ENCODE measurements at regions of chr9 and their contacts with region 1.

Region 1: GRCh38 chr9:12775679-12776512 is 1.1 kb downstream of the LURAP1L start:
- DNase-seq: peak; percentile 51 to 69
- H3K4me3 ChIP-seq: peak overlapping the region; percentile 59 to 94
- H3K27ac ChIP-seq: peak overlapping the region; percentile 87 to 96
- H3K4me1 ChIP-seq: peaks cover 2 to 7% of the 10 kb centered on the region in 2 donors
- H3K27me3 ChIP-seq: no peaks in the 10 kb centered on the region
- CTCF ChIP-seq: peak; percentile 39 to 56 (median 53)

Region 2: DNA sequence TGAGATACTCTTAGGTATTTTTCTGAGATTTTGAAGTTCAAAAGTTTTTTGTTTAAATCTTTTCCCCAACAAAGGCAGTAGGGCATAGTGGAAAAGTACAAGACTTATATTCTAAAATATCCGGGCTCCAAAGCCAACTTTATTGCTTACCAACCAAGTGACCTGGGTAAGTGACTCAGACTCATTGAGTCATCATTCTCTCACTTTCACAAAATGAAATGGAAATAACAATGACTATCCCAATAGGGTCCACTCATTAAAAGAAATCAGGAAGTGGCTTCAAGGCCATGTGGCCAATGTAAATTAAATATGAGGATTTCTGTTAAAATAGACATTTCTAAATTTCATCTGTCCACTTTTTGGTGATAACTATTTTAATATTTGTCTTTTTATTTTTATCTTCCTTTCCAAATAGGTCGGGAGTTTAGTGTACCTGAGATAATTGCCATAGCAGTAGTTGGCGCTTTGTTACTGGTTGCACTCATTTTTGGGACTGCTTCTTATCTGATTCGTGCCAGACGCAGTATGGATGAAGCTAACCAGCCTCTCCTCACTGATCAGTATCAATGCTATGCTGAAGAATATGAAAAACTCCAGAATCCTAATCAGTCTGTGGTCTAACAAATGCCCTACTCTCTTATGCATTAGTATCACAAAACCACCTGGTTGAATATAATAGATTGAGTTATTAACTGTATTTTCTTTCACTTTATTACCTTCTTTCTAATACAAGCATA is 67.2 kb before region 1 on chr9:
- intact Hi-C with region 1: loop called (anchors 5 kb)
- DNase-seq: no peak
- H3K4me3 ChIP-seq: no peak overlapping the region
- H3K27ac ChIP-seq: no peak overlapping the region
- H3K4me1 ChIP-seq: no peaks in the 10 kb centered on the region
- H3K27me3 ChIP-seq: no peaks in the 10 kb centered on the region
- CTCF ChIP-seq: no peak

Region 3: DNA sequence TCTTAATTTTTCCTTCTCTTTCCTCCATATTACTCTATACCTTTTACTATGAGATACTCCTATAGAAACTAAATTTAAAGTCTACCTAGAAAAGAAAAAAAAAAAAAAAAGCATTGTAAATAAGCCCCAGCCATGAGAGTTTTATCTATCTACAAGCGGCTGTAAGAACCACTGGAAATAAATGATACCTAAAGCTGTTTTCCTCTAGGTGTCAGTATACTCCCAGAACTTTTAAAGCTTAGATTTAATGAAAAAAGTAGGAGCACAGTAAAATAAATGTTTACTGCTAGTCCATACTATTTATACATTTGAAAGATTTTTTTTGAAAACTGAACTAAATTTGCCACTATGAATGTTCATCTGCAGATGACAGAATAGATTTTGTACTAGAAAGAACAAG is 56.5 kb before region 1 on chr9:
- intact Hi-C with region 1: loop called (anchors 2 kb)
- DNase-seq: no peak
- H3K4me3 ChIP-seq: no peak overlapping the region
- H3K27ac ChIP-seq: no peak overlapping the region
- H3K4me1 ChIP-seq: no peaks in the 10 kb centered on the region
- H3K27me3 ChIP-seq: no peaks in the 10 kb centered on the region
- CTCF ChIP-seq: peak in 2 of 3 experiments; percentile 40 to 56

Region 4: DNA sequence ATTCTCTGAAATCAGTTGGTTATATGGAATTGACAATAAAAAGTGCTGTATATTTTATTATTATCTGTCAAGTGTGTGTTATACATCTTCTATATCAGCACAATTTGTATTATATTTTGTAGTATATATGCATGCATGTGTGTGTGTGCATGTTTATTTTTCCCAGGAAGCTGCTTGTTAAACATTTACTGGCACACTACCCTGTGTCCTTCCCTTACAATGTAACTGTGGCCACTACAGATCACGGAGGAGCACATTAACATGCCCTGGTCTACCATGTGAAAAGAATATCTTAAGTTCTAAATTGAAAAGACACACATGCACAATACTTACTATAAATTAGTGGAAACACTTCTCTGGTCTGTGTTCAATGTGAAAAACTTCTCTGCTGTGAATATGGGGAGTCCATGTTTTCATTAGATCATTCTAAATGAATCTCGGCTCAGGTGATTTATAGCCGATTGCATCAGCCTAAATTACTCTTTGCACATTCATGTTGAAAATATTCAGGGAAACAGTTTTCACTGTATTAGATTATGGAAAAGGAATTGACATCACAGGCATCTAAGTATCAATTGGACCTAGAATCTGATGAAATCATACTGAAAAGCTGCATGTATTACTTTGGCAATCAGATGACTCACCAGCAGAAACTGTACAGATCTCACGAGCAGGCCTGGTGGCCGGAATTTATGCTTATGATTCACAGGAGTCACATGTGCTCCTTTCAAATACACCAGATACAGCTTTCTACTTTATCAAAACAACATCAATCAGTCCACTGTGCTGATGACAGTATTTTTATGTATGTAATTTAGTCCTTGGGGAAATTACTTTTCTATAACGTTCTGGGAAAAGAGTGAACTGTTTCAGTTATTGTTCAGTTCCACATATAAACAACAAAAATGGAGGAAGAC is 38.3 kb after region 1 on chr9:
- intact Hi-C with region 1: loop called (anchors 2 kb)
- DNase-seq: peak; percentile 39 to 88
- H3K4me3 ChIP-seq: no peak overlapping the region
- H3K27ac ChIP-seq: peak overlapping the region; percentile 58 to 78
- H3K4me1 ChIP-seq: peaks cover 0 to 43% of the 10 kb centered on the region in 2 donors
- H3K27me3 ChIP-seq: no peaks in the 10 kb centered on the region
- CTCF ChIP-seq: peak; percentile 11 to 35 (median 19)

Measured in ascending aorta (tissue), 2 donors.